ENCODE measurements at regions of chr14 and their contacts with region 1.

Region 1: GRCh38 chr14:88492272-88493089 is 62.3 kb downstream of the PTPN21 start:
- DNase-seq: peak in 1 of 2 donors; percentile 77
- H3K4me3 ChIP-seq: no peak overlapping the region
- H3K27ac ChIP-seq: no peak overlapping the region
- H3K4me1 ChIP-seq: peaks cover 0 to 9% (median 2%) of the 10 kb centered on the region in 4 donors
- H3K27me3 ChIP-seq: no peaks in the 10 kb centered on the region
- CTCF ChIP-seq: peak; percentile 84 to 92

Region 2: DNA sequence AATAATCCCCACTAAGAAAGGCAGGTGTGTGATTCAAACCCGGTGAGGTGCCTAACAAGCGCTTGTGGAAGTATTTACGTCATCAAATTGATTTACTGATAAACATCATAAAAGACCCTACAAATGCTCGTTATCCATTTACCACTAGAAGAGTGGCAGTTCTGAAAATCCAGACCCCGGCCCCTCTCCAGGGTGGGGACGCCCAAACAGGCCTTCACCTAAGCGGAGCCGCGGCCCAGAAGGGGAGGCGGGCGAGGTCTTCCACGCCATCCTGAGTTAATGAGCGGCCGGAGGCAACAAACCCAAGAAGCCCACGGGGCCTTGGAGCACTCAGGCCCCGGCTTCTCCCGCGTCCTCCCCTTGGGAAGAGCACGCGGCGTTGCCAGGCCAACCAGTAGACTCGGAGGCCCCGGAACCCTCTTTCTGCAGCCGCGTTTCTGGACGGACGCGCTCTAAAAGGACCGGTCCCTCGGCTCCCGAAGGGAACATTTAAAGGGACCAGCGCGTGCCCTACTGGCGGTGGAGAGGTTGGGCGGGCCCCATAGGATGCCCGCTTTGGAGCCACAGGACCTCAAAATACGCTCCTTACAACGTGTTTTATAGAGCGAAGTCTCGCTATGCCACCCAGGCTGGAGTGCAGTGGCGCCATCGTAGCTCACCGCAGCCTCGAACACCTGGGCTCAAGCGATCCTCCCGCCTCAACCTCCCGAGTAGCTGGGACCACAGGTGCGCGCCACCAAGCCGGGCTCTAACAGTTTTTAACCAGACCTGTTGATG is 58.8 kb after region 1 on chr14:
- intact Hi-C with region 1: loop called (anchors 5 kb)
- DNase-seq: peak; percentile 82 to 88
- H3K4me3 ChIP-seq: peak overlapping the region; percentile 54 to 66
- H3K27ac ChIP-seq: peak overlapping the region; percentile 69 to 85
- H3K4me1 ChIP-seq: peaks cover 14 to 65% (median 37%) of the 10 kb centered on the region in 4 donors
- H3K27me3 ChIP-seq: no peaks in the 10 kb centered on the region
- CTCF ChIP-seq: peak; percentile 46 to 56